ENCODE measurements at regions of chr14 and their contacts with region 1.

Region 1: GRCh38 chr14:55794655-55795595 is 214.9 kb downstream of the KTN1 start:
- DNase-seq: peak; percentile 33
- H3K4me3 ChIP-seq: no peak overlapping the region
- H3K27ac ChIP-seq: no peak overlapping the region
- H3K4me1 ChIP-seq: peaks cover 25% of the 10 kb centered on the region
- H3K27me3 ChIP-seq: no peaks in the 10 kb centered on the region
- CTCF ChIP-seq: no peak
- POLR2A ChIP-seq: no peak

Region 2: DNA sequence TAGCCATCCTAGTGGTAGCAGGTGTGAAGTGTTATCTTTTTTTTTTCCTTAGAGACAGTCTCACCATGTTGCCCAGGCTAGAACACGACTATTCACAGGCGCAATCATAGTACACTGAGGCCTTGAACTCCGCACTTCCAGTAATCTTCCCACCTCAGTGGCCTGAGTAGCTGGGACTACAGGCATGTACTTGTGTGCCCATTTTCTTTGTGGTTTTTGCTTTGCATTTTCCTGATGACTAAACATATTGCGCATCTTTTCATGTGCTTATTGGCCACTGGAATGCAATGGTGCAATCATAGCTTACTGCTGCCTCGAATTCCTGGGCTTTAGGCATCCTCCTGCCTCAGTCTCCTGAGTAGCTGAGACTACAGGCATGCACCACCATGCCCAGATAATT is 859.0 kb before region 1 on chr14:
- CTCF ChIA-PET with region 1: no interaction called
- POLR2A ChIA-PET with region 1: no interaction called
- dilution Hi-C with region 1: no loop called
- intact Hi-C with region 1: no loop called
- DNase-seq: no peak
- H3K4me3 ChIP-seq: no peak overlapping the region
- H3K27ac ChIP-seq: no peak overlapping the region
- H3K4me1 ChIP-seq: no peaks in the 10 kb centered on the region
- H3K27me3 ChIP-seq: no peaks in the 10 kb centered on the region
- CTCF ChIP-seq: no peak
- POLR2A ChIP-seq: no peak

Region 3: GRCh38 chr14:55579724-55580469 is 215.0 kb before region 1 on chr14 and contains the start of gene KTN1:
- CTCF ChIA-PET with region 1: no interaction called
- POLR2A ChIA-PET with region 1: no interaction called
- dilution Hi-C with region 1: no loop called
- intact Hi-C with region 1: loop called (anchors 10 kb)
- DNase-seq: peak; percentile 76
- H3K4me3 ChIP-seq: peak within 1 kb of the TSS; percentile 62 to 87 (median 73)
- H3K27ac ChIP-seq: peak within 1 kb of the TSS; percentile 70
- H3K4me1 ChIP-seq: peaks cover 8% of the 10 kb centered on the region
- H3K27me3 ChIP-seq: no peaks in the 10 kb centered on the region
- CTCF ChIP-seq: no peak
- POLR2A ChIP-seq: peak; percentile 67
- total RNA-seq, gene KTN1: 135 and 148 TPM in 2 replicates

Region 4: DNA sequence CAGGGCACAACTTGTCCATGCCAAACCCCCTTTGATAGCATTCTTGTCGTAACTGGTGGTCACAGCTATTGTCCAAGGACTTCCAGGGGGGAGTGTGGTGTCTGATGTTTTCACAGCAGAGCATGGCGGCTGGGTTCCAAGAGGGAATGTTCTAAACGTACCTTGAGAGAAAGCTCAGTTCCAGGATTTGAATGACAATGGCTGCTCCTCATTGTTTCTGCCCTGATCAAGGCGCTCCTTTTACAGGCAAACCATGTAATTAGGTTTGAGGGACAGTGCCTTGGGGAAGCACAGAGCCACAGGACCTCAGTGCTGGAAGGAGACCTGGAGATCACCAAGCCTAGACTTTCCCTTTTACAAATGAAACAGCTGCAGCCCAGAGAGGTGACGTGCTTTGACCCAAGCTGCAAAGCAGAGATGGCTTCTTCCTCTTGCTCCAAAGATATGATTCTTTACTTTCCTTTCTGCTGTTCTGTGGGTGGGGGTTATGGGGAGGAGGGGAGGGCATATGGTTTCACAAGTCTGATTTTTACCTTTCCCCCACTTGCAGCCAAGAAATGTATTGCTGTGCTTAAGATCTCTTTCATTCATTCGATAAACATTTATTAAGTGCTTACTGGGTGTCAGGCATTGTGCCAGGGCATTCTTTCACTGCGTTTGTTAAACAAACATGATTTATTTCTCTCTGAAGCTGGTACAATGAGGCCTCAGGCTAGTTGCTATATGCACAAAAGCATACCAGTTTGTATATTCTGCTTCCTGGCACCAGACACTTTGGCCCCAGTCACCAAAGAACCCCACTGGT is 42.1 kb before region 1 on chr14:
- CTCF ChIA-PET with region 1: interaction called, 5 read pairs
- POLR2A ChIA-PET with region 1: no interaction called
- dilution Hi-C with region 1: no loop called
- intact Hi-C with region 1: loop called (anchors 5 kb)
- DNase-seq: peak; percentile 93
- H3K4me3 ChIP-seq: no peak overlapping the region
- H3K27ac ChIP-seq: no peak overlapping the region
- H3K4me1 ChIP-seq: peaks cover 10% of the 10 kb centered on the region
- H3K27me3 ChIP-seq: no peaks in the 10 kb centered on the region
- CTCF ChIP-seq: no peak
- POLR2A ChIP-seq: no peak

Region 5: DNA sequence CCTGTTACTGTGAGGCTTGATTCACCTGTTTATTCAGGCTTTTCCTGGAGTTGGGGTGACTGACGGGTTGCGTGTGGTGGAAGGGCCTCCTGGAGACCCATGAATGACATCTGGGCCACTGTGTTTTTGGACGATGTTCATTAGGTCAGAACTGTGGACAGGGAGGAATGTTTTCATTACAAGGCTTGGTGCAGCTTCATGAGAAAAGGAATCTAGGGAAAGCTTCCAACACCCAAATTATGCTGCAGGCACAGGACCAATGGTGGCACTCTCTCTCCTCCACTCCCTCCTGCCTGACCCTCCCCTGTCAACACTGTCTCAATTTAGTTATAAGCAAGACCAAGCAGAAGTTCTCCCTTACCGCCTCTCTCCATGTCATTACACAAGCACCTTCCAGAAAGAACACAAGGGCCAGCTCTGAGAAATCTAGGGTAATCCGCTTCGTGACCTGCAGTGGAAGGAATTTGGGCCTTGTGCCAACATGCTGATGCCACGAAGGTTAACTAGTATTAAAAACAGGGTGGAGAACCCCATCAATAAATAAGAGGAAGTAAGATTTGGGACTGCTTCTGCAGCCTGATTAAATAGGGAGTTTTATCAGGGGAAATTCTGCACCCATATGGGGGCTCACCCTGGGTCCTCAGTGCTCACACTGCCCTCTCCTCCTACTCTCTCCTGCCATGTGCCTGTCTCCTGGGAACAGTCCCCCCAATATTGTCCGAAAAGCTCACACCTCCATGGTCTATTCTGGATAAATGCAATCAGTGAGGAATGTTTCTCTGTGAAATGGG is 14.6 kb before region 1 on chr14:
- CTCF ChIA-PET with region 1: interaction called, 6 read pairs
- POLR2A ChIA-PET with region 1: no interaction called
- dilution Hi-C with region 1: no loop called
- intact Hi-C with region 1: loop called (anchors 1 kb)
- DNase-seq: peak; percentile 95
- H3K4me3 ChIP-seq: no peak overlapping the region
- H3K27ac ChIP-seq: peak overlapping the region; percentile 44
- H3K4me1 ChIP-seq: peaks cover 18% of the 10 kb centered on the region
- H3K27me3 ChIP-seq: no peaks in the 10 kb centered on the region
- CTCF ChIP-seq: no peak
- POLR2A ChIP-seq: peak; percentile 51

Region 6: GRCh38 chr14:55807059-55807499 is 12.2 kb after region 1 on chr14:
- CTCF ChIA-PET with region 1: interaction called, 7 read pairs
- POLR2A ChIA-PET with region 1: interaction called, 4 read pairs
- dilution Hi-C with region 1: no loop called
- intact Hi-C with region 1: loop called (anchors 1 kb)
- DNase-seq: peak; percentile 98
- H3K4me3 ChIP-seq: no peak overlapping the region
- H3K27ac ChIP-seq: peak overlapping the region; percentile 82
- H3K4me1 ChIP-seq: peaks cover 33% of the 10 kb centered on the region
- H3K27me3 ChIP-seq: no peaks in the 10 kb centered on the region
- CTCF ChIP-seq: no peak
- POLR2A ChIP-seq: no peak